Endothelial cell of umbilical vein (primary cell): ENCODE measurements at regions of chr3 and their contacts with region 1.

Region 1: GRCh38 chr3:134449277-134449676 is 36.5 kb downstream of the ANAPC13 start:
- DNase-seq: peak; percentile 11
- H3K4me3 ChIP-seq: no peak overlapping the region
- H3K27ac ChIP-seq: no peak overlapping the region
- H3K4me1 ChIP-seq: peaks cover 23% of the 10 kb centered on the region
- H3K27me3 ChIP-seq: peaks cover 0 to 6% of the 10 kb centered on the region in 2 experiments
- CTCF ChIP-seq: peak; percentile 32 to 45
- POLR2A ChIP-seq: no peak

Region 2: GRCh38 chr3:134427400-134428145 is 21.7 kb before region 1 on chr3:
- CTCF ChIA-PET with region 1: interaction called, 8 read pairs
- POLR2A ChIA-PET with region 1: no interaction called
- dilution Hi-C with region 1: no loop called
- intact Hi-C with region 1: loop called (anchors 2 kb)
- DNase-seq: peak; percentile 77
- H3K4me3 ChIP-seq: no peak overlapping the region
- H3K27ac ChIP-seq: peak overlapping the region; percentile 73
- H3K4me1 ChIP-seq: peaks cover 8% of the 10 kb centered on the region
- H3K27me3 ChIP-seq: peaks cover 5 to 11% of the 10 kb centered on the region in 2 experiments
- CTCF ChIP-seq: no peak
- POLR2A ChIP-seq: no peak

Region 3: DNA sequence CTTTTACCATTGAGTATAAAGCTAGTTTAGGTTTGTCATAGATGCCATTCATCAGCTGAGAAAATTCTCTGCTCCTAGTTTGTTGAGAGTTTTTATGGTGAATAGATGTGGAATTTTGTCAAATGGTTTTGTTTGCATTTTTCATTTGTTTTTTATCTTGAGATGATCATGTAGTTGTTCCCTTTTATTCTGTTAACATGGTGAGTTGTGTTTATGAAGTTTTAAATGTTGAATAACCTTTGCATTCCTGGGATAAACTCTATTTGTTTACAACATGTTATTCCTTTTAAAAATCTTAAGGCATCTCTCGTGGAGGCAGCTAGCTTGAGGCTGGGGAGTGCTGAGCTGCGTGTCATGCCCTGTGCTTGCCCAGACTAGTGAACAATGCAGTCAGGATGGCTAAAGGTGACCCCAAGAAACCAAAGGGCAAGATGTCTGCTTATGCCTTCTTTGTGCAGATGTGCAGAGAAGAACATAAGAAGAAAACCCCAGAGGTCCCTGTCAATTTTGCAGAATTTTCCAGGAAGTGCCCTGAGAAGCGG is 12.0 kb before region 1 on chr3:
- CTCF ChIA-PET with region 1: interaction called, 13 read pairs
- POLR2A ChIA-PET with region 1: no interaction called
- dilution Hi-C with region 1: no loop called
- intact Hi-C with region 1: no loop called
- DNase-seq: no peak
- H3K4me3 ChIP-seq: no peak overlapping the region
- H3K27ac ChIP-seq: no peak overlapping the region
- H3K4me1 ChIP-seq: no peaks in the 10 kb centered on the region
- H3K27me3 ChIP-seq: peaks cover 11 to 14% of the 10 kb centered on the region in 2 experiments
- CTCF ChIP-seq: no peak
- POLR2A ChIP-seq: no peak

Region 4: GRCh38 chr3:134567605-134568004 is 118.3 kb after region 1 on chr3:
- CTCF ChIA-PET with region 1: no interaction called
- POLR2A ChIA-PET with region 1: no interaction called
- dilution Hi-C with region 1: no loop called
- intact Hi-C with region 1: no loop called
- DNase-seq: no peak
- H3K4me3 ChIP-seq: no peak overlapping the region
- H3K27ac ChIP-seq: no peak overlapping the region
- H3K4me1 ChIP-seq: no peaks in the 10 kb centered on the region
- H3K27me3 ChIP-seq: no peaks in the 10 kb centered on the region
- CTCF ChIP-seq: no peak
- POLR2A ChIP-seq: no peak

Region 5: GRCh38 chr3:134718726-134719125 is 269.4 kb after region 1 on chr3:
- CTCF ChIA-PET with region 1: no interaction called
- POLR2A ChIA-PET with region 1: no interaction called
- dilution Hi-C with region 1: no loop called
- intact Hi-C with region 1: no loop called
- DNase-seq: no peak
- H3K4me3 ChIP-seq: no peak overlapping the region
- H3K27ac ChIP-seq: no peak overlapping the region
- H3K4me1 ChIP-seq: no peaks in the 10 kb centered on the region
- H3K27me3 ChIP-seq: peaks cover 2 to 10% of the 10 kb centered on the region in 2 experiments
- CTCF ChIP-seq: no peak
- POLR2A ChIP-seq: no peak